Activated naive CD4-positive, alpha-beta T cell treated with anti-CD3 and anti-CD28 coated beads for 36 hours (primary cell): ENCODE measurements at regions of chr14 and their contacts with region 1.

Region 1: DNA sequence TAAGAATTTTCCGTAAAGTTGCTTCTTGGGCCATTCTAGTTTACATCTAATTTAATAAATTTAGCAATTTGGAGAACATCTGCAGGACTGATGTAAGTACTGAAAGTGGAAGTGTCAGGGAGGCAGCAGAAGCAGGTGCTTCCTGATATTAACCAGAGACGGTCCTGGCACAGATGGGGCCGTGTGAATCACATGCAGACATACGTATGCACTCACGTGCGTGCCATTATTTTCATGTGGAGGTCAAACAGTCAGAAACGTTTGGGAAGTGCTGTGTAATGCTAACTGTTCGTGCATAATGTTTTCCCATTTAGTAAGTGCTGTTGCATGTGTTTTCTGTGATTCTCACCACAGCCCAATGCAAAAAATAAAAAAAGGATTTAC is 87.8 kb upstream of the DYNC1H1 start:
- DNase-seq: peak; percentile 94
- H3K4me3 Mint-ChIP-seq: peak overlapping the region; percentile 52
- H3K27ac Mint-ChIP-seq: peak overlapping the region; percentile 85
- H3K4me1 Mint-ChIP-seq: peaks cover 89% of the 10 kb centered on the region
- H3K27me3 Mint-ChIP-seq: no peaks in the 10 kb centered on the region

Region 2: DNA sequence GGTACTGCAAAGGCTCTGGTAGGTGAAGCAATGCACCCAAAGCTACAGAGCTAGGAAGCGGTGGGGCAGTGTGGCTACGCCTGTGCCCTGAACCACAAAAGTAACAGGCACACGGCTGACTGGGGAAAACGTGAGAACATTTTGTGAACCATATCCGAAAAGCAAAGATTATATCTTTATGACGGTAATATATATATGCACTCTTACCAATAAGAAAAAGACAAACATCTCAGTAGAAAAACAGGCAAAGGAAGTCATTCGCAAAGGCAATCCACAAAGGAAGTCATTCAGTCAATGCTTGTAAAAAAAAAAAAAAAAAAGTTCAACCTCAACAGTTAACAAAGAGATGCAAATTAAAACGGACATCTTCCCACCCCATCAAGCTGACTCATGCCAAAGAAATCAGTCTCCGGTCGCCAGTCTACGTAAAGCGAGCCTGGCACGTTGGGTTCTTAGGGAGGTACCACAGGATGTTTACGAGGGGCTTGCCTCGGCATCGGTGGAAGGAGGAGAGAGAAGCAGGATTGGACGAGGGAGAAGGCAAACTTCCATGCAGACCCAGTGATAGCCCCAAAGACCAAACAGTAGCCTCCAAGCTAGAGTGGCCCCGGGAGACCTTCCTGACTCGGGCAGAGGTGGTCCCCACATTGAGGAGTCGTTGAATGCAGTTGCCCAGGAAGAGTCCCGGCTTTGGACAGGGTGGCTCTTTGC is 154.4 kb before region 1 on chr14:
- CTCF ChIA-PET with region 1: no interaction called
- intact Hi-C with region 1: loop called (anchors 1 kb)
- DNase-seq: peak; percentile 88
- H3K4me3 Mint-ChIP-seq: peak overlapping the region; percentile 73
- H3K27ac Mint-ChIP-seq: peak overlapping the region; percentile 94
- H3K4me1 Mint-ChIP-seq: peaks cover 35% of the 10 kb centered on the region
- H3K27me3 Mint-ChIP-seq: no peaks in the 10 kb centered on the region

Region 3: GRCh38 chr14:101761032-101761880 is 115.3 kb before region 1 on chr14 and contains the start of gene PPP2R5C:
- CTCF ChIA-PET with region 1: no interaction called
- intact Hi-C with region 1: loop called (anchors 1 kb)
- DNase-seq: peak; percentile 85
- H3K4me3 Mint-ChIP-seq: peak within 1 kb of the TSS; percentile 91
- H3K27ac Mint-ChIP-seq: peak within 1 kb of the TSS; percentile 79
- H3K4me1 Mint-ChIP-seq: peaks cover 42% of the 10 kb centered on the region
- H3K27me3 Mint-ChIP-seq: no peaks in the 10 kb centered on the region
- total RNA-seq, gene PPP2R5C: 280 to 294 TPM

Region 4: DNA sequence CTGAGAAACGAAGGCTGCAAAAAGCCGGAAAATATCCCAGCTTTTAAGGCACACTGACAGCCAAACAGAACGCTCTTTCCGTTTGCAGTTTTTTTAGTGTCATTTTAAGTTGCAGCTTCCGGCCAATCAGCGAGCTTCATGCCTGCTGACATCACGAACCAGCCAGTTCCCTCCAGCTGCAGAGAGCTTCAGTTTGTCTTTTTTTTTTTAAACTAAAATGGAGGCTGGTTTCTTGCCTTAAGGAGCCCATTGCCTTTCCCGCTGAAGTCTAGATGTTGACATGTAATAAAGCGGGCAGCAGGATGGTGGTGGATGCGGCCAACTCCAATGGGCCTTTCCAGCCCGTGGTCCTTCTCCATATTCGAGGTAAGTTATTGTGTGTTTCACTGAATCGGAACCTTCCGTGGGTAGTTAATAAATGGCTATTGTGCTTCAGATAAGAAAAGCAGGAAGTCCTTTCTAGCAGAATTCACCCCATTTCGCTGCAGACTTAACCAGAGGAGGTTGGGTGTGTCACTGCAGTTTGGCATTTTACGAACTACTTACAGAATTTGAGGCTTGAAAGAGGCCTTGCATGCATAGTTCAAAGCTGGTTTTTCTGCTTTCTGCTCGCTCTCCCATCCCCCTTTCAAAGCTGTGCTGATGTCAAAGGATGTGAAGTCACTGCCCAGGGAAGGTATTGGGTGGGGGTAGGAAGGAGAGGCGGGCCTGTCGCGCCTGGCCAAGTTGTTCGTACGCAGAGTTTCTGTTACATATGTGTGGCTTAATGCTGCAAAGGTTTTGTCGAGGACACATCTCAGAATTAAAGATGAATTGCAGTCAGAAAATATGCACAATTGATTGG is 66.7 kb before region 1 on chr14:
- CTCF ChIA-PET with region 1: interaction called, 3 read pairs
- intact Hi-C with region 1: loop called (anchors 1 kb)
- DNase-seq: peak; percentile 94
- H3K4me3 Mint-ChIP-seq: peak overlapping the region; percentile 83
- H3K27ac Mint-ChIP-seq: peak overlapping the region; percentile 95
- H3K4me1 Mint-ChIP-seq: peaks cover 42% of the 10 kb centered on the region
- H3K27me3 Mint-ChIP-seq: no peaks in the 10 kb centered on the region

Region 5: GRCh38 chr14:101854366-101854765 is 22.2 kb before region 1 on chr14:
- CTCF ChIA-PET with region 1: interaction called, 3 read pairs
- intact Hi-C with region 1: loop called (anchors 1 kb)
- DNase-seq: peak; percentile 53
- H3K4me3 Mint-ChIP-seq: no peak overlapping the region
- H3K27ac Mint-ChIP-seq: peak overlapping the region; percentile 38
- H3K4me1 Mint-ChIP-seq: peaks cover 81% of the 10 kb centered on the region
- H3K27me3 Mint-ChIP-seq: no peaks in the 10 kb centered on the region

Region 6: GRCh38 chr14:101964297-101965144 is 88.0 kb after region 1 on chr14 and contains the start of gene DYNC1H1:
- CTCF ChIA-PET with region 1: interaction called, 3 read pairs
- intact Hi-C with region 1: loop called (anchors 1 kb)
- DNase-seq: peak; percentile 86
- H3K4me3 Mint-ChIP-seq: peak within 1 kb of the TSS; percentile 89
- H3K27ac Mint-ChIP-seq: peak within 1 kb of the TSS; percentile 71
- H3K4me1 Mint-ChIP-seq: peaks cover 39% of the 10 kb centered on the region
- H3K27me3 Mint-ChIP-seq: no peaks in the 10 kb centered on the region
- total RNA-seq, gene DYNC1H1: 207 to 208 TPM

Region 7: GRCh38 chr14:102187058-102187457 is 310.5 kb after region 1 on chr14:
- CTCF ChIA-PET with region 1: no interaction called
- intact Hi-C with region 1: loop called (anchors 5 kb)
- DNase-seq: no peak
- H3K4me3 Mint-ChIP-seq: no peak overlapping the region
- H3K27ac Mint-ChIP-seq: no peak overlapping the region
- H3K4me1 Mint-ChIP-seq: peaks cover 66% of the 10 kb centered on the region
- H3K27me3 Mint-ChIP-seq: no peaks in the 10 kb centered on the region